Endothelial cell of umbilical vein (primary cell): ENCODE measurements at regions of chr7 and their contacts with region 1.

Region 1: DNA sequence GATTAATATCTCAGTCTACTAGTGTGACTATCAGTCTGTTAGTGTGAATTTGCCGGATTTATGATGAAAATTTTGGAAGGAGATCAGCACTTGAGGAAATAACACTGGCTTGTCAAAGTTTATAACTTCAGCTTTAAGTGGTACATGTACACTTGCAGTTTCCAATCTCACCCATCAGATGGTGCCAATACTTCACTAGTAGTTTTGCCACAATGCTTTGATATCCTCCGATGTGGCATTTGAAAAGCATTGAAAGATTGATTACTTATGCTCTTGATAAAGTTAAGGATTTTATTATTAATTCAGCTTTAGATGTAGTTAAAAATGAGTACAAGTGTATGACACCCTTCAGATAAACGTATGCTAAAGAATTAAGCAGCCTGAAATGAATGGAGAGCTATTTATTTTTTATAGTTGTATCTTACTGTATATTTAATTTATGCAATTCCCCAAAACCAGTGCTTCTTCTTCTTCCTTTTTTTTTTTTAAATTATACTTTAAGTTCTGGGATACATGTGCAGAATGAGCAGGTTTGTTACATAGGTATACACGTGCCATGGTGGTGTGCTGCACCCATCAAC is 98.2 kb downstream of the ANLN start:
- DNase-seq: peak; percentile 70
- H3K4me3 ChIP-seq: no peak overlapping the region
- H3K27ac ChIP-seq: no peak overlapping the region
- H3K4me1 ChIP-seq: no peaks in the 10 kb centered on the region
- H3K27me3 ChIP-seq: peaks cover 8 to 25% of the 10 kb centered on the region in 2 experiments
- CTCF ChIP-seq: peak; percentile 38 to 53
- POLR2A ChIP-seq: no peak

Region 2: GRCh38 chr7:36440880-36441279 is 47.0 kb before region 1 on chr7:
- CTCF ChIA-PET with region 1: interaction called, 13 read pairs
- POLR2A ChIA-PET with region 1: no interaction called
- dilution Hi-C with region 1: no loop called
- intact Hi-C with region 1: no loop called
- DNase-seq: peak; percentile 48
- H3K4me3 ChIP-seq: no peak overlapping the region
- H3K27ac ChIP-seq: no peak overlapping the region
- H3K4me1 ChIP-seq: no peaks in the 10 kb centered on the region
- H3K27me3 ChIP-seq: no peaks in the 10 kb centered on the region
- CTCF ChIP-seq: peak in 1 of 2 donors; percentile 12
- POLR2A ChIP-seq: no peak

Region 3: DNA sequence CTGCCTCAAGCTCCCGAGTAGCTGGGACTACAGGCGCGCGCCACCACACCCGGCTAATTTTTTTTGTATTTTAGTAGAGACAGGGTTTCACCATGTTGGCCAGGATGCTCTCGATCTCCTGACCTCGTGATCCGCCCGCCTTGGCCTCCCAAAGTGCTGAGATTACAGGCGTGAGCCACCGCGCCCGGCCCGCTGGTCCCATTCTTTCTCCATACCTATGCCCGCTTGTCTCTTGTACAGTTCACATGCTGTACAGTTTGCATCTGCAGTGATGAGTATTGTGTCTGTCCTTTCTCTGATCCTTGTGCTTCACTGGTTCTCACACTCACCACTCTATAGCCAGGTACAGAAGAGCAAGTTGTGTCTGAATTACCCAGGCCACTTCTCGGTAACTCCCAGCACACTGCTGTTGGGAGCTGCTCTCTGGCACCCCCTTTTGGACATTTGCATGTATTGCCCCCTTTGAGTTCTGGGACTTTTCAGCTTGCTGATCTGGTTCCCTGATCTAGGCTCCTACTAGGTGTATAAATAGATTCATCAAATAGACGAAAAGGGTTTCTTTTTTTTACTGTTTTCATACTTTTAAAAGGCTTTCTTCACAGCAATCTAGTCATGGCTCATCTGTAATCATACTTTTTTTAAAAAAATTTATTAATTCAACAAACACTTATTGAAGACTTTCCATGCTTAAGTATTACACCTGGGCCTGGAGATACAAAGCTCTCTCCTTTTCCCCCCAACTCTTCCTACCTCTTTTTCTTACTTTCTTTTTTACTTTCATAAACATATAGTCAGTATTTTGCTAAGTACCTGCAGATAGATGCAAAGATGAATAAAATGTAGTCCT is 183.0 kb after region 1 on chr7:
- CTCF ChIA-PET with region 1: interaction called, 165 read pairs
- POLR2A ChIA-PET with region 1: no interaction called
- dilution Hi-C with region 1: no loop called
- intact Hi-C with region 1: loop called (anchors 1 kb)
- DNase-seq: peak; percentile 69
- H3K4me3 ChIP-seq: no peak overlapping the region
- H3K27ac ChIP-seq: no peak overlapping the region
- H3K4me1 ChIP-seq: no peaks in the 10 kb centered on the region
- H3K27me3 ChIP-seq: no peaks in the 10 kb centered on the region
- CTCF ChIP-seq: peak; percentile 87 to 90
- POLR2A ChIP-seq: no peak

Region 4: DNA sequence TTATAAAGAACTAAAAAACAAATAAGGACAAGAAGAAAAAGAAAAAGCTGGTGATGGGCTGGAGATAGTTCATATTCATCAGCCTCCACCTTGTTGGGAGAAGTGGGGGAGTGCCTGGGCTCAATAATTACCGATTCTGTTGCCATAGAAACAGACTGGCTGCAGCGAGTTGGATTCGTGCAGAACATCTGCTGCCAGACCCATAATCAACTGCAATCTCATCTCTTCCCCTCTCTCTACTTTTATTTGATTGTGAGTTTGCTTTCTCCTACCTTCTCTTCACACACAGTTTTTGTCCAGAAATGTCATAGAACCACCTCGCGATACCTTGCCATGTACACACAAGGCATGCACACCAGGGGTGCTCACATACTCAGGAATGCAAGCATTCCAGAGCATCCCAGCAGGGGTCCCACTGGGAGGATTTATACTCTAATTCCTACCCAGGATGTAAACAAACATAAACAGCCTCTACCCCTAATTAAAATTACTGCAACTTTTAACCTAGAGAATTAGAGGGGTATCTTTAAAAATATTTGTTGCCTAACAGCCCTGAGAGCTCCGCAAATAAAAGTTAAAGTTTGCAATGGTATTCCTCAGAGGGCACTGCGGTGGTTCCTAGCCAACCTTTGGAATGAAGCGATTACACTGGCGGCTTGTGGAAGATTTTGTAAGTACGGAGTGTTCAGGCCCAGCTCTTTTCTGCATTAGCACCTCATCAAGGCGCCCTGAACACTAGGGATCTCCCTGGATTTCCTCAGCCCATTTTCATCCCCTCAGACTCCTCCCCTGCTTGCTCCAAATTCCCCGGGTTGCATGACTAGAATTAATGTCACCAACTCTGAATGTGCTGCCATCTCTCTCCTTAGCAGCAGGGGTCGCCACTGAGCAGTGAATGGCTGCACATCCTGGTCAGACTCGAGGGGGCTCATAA is 498.9 kb after region 1 on chr7:
- CTCF ChIA-PET with region 1: interaction called, 12 read pairs
- POLR2A ChIA-PET with region 1: no interaction called
- dilution Hi-C with region 1: no loop called
- intact Hi-C with region 1: no loop called
- DNase-seq: peak; percentile 54
- H3K4me3 ChIP-seq: no peak overlapping the region
- H3K27ac ChIP-seq: no peak overlapping the region
- H3K4me1 ChIP-seq: no peaks in the 10 kb centered on the region
- H3K27me3 ChIP-seq: no peaks in the 10 kb centered on the region
- CTCF ChIP-seq: peak; percentile 86 to 92
- POLR2A ChIP-seq: no peak

Region 5: GRCh38 chr7:37201003-37201875 is 713.4 kb after region 1 on chr7:
- CTCF ChIA-PET with region 1: interaction called, 182 read pairs
- POLR2A ChIA-PET with region 1: no interaction called
- dilution Hi-C with region 1: no loop called
- intact Hi-C with region 1: loop called (anchors 1 kb)
- DNase-seq: peak; percentile 87
- H3K4me3 ChIP-seq: no peak overlapping the region
- H3K27ac ChIP-seq: no peak overlapping the region
- H3K4me1 ChIP-seq: peaks cover 3% of the 10 kb centered on the region
- H3K27me3 ChIP-seq: no peaks in the 10 kb centered on the region
- CTCF ChIP-seq: peak; percentile 79 to 90
- POLR2A ChIP-seq: no peak